Esophagus muscularis mucosa (tissue), 4 donors: ENCODE measurements at regions of chr14 and their contacts with region 1.

Region 1: GRCh38 chr14:64012720-64013119 is 159.9 kb downstream of the SYNE2 start:
- DNase-seq: no peak
- H3K4me3 ChIP-seq: no peak overlapping the region
- H3K27ac ChIP-seq: no peak overlapping the region
- H3K4me1 ChIP-seq: no peaks in the 10 kb centered on the region
- H3K27me3 ChIP-seq: no peaks in the 10 kb centered on the region
- CTCF ChIP-seq: no peak
- EP300 ChIP-seq: no peak
- POLR2A ChIP-seq: no peak

Region 2: GRCh38 chr14:63949696-63950095 is 63.0 kb before region 1 on chr14:
- intact Hi-C with region 1: no loop called
- DNase-seq: no peak
- H3K4me3 ChIP-seq: no peak overlapping the region
- H3K27ac ChIP-seq: no peak overlapping the region
- H3K4me1 ChIP-seq: peaks cover 0 to 8% (median 0%) of the 10 kb centered on the region in 4 donors
- H3K27me3 ChIP-seq: no peaks in the 10 kb centered on the region
- CTCF ChIP-seq: no peak
- EP300 ChIP-seq: no peak
- POLR2A ChIP-seq: no peak

Region 3: GRCh38 chr14:64117671-64118402 is 105.1 kb after region 1 on chr14:
- intact Hi-C with region 1: loop called (anchors 10 kb)
- DNase-seq: no peak
- H3K4me3 ChIP-seq: no peak overlapping the region
- H3K27ac ChIP-seq: peak overlapping the region; percentile 51 to 73 (median 60)
- H3K4me1 ChIP-seq: peaks cover 6 to 20% (median 7%) of the 10 kb centered on the region in 4 donors
- H3K27me3 ChIP-seq: no peaks in the 10 kb centered on the region
- CTCF ChIP-seq: peak in 1 of 3 experiments; percentile 6
- EP300 ChIP-seq: peak; percentile 62
- POLR2A ChIP-seq: no peak